Activated CD4-positive, alpha-beta memory T cell treated with anti-CD3 and anti-CD28 coated beads for 36 hours (primary cell): ENCODE measurements at regions of chr17 and their contacts with region 1.

Region 1: GRCh38 chr17:19362277-19363113 is at the start of gene B9D1:
- DNase-seq: peak; percentile 96
- H3K4me3 Mint-ChIP-seq: peak within 1 kb of the TSS; percentile 86
- H3K27ac Mint-ChIP-seq: peak within 1 kb of the TSS; percentile 74
- H3K4me1 Mint-ChIP-seq: peaks cover 8% of the 10 kb centered on the region
- H3K27me3 Mint-ChIP-seq: peaks cover 4% of the 10 kb centered on the region
- total RNA-seq, gene B9D1: 7.2 to 7.6 TPM

Region 2: DNA sequence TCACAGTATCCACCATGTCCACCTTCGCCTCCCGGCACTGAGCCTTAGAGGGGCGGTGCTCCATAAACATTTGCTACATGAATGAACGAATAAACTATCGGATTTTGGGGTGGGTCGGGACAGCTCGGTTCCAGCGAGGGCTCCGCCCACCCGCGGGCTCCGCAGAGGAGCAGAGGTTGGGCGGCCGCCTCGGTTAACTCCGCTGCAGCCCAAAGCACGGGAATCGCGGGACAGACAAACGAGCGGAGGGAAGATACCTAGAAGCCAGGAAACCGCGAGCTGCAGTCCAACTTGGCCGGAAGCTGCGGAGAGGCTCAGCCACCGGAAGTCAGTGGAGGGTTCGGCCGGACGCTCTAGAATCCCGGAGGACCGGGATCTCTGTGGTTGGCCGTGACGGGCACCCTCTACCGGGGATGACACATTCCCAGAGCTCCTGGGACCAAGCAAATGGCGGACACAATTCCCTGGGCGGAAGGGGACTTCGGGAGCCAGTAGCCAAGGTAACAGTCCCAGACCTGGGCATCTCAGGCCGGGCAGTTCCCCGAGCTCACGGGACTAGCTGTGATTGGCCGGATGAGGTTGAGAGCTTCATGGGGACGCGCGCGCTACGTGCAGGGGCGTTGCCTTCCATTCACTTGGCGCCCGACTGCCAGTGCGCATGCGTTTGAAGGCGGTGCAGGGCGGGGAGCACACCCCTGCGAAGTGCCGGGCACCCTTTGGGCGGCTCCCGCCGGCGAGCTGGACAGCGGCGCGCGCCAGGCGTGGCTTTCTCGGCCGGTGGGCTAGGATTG is 15.3 kb after region 1 on chr17:
- CTCF ChIA-PET with region 1: interaction called, 82 read pairs
- POLR2A ChIA-PET with region 1: interaction called, 14 read pairs
- intact Hi-C with region 1: loop called (anchors 1 kb)
- DNase-seq: peak; percentile 98
- H3K4me3 Mint-ChIP-seq: peak overlapping the region; percentile 97
- H3K27ac Mint-ChIP-seq: peak overlapping the region; percentile 99
- H3K4me1 Mint-ChIP-seq: peaks cover 16% of the 10 kb centered on the region
- H3K27me3 Mint-ChIP-seq: no peaks in the 10 kb centered on the region

Region 3: GRCh38 chr17:19453296-19453695 is 90.8 kb after region 1 on chr17:
- CTCF ChIA-PET with region 1: interaction called, 164 read pairs
- POLR2A ChIA-PET with region 1: interaction called, 3 read pairs
- intact Hi-C with region 1: no loop called
- DNase-seq: no peak
- H3K4me3 Mint-ChIP-seq: no peak overlapping the region
- H3K27ac Mint-ChIP-seq: no peak overlapping the region
- H3K4me1 Mint-ChIP-seq: peaks cover 6% of the 10 kb centered on the region
- H3K27me3 Mint-ChIP-seq: peaks cover 9% of the 10 kb centered on the region

Region 4: GRCh38 chr17:19470532-19471261 is 108.2 kb after region 1 on chr17:
- CTCF ChIA-PET with region 1: interaction called, 11 read pairs
- POLR2A ChIA-PET with region 1: no interaction called
- intact Hi-C with region 1: no loop called
- DNase-seq: no peak
- H3K4me3 Mint-ChIP-seq: no peak overlapping the region
- H3K27ac Mint-ChIP-seq: no peak overlapping the region
- H3K4me1 Mint-ChIP-seq: no peaks in the 10 kb centered on the region
- H3K27me3 Mint-ChIP-seq: peaks cover 8% of the 10 kb centered on the region

Region 5: DNA sequence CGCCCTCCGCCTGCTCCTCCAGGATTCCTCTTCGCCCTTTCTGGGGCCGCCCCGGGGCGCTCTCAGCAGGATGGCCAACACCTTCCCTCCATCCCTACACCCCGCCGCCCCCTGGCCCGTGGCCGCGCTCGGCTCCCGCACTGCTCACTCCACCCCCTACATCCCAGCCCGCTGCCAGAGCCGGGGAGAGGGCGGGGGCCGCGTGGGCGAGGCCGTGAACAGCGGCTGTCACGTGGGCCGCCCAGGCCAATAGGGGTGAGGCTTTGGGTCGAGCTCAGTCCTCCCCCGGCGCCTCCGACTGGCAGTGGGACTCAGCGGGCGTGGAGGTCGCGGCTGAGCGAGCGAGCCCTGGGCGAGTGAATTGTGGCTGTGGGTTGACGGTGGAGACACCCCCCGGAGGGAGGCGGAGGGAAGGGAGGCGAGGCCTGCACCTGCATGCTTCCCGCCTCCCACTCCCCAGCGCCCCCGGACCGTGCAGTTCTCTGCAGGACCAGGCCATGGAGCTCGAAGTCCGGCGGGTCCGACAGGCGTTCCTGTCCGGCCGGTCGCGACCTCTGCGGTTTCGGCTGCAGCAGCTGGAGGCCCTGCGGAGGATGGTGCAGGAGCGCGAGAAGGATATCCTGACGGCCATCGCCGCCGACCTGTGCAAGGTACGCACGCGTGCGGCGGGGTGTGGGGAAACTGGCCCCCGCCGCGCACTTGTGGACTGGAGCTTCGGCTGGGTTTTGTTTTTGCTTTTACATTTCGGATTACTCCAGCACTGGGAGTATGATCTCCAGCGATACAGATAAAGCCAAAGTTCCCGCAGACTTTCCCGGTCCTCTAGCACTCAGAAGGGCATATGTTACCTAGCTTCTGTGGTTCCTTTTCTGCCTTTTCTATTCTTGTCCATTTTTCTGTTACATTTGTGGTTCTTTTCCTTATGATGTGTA is 286.2 kb after region 1 on chr17 and contains the start of gene ALDH3A2:
- CTCF ChIA-PET with region 1: interaction called, 13 read pairs
- POLR2A ChIA-PET with region 1: interaction called, 3 read pairs
- intact Hi-C with region 1: no loop called
- DNase-seq: peak; percentile 97
- H3K4me3 Mint-ChIP-seq: peak within 1 kb of the TSS; percentile 91
- H3K27ac Mint-ChIP-seq: peak within 1 kb of the TSS; percentile 86
- H3K4me1 Mint-ChIP-seq: peaks cover 36% of the 10 kb centered on the region
- H3K27me3 Mint-ChIP-seq: no peaks in the 10 kb centered on the region
- total RNA-seq, gene ALDH3A2: 27.3 to 35.7 TPM